Heart right ventricle (tissue), 16 donors: ENCODE measurements at regions of chr20 and their contacts with region 1.

Region 1: DNA sequence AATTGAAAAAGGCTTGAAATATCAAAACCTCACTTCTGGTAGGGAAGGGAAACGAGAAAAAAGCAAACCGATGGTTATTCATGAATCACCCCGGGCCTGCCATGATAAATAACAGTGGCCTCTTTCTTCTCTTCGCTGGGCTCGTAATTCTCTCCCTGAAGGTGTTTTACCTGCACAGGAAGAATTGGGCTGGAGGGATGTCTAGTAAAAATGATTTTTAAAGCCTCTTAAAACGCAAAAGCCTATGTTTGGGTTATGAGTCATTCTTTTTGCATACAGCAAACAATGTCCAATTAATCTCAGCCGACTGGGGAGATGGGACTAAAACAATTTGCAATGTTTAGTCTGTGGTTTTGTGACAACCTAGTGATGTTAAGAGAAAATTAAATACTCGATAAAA is 16.8 kb downstream of the LINC00237 start:
- DNase-seq: no peak
- ATAC-seq: no peak
- H3K4me3 ChIP-seq: no peak overlapping the region
- H3K27ac ChIP-seq: no peak overlapping the region
- H3K4me1 ChIP-seq: no peaks in the 10 kb centered on the region
- H3K27me3 ChIP-seq: peaks cover 0 to 92% (median 82%) of the 10 kb centered on the region in 7 donors
- CTCF ChIP-seq: no peak

Region 2: GRCh38 chr20:20649945-20650344 is 439.4 kb before region 1 on chr20:
- intact Hi-C with region 1: loop called in 1 of 10 experiments (anchors 10 kb)
- DNase-seq: no peak
- ATAC-seq: no peak
- H3K4me3 ChIP-seq: no peak overlapping the region
- H3K27ac ChIP-seq: no peak overlapping the region
- H3K4me1 ChIP-seq: peaks cover 0 to 3% (median 0%) of the 10 kb centered on the region in 9 donors
- H3K27me3 ChIP-seq: no peaks in the 10 kb centered on the region
- CTCF ChIP-seq: no peak

Region 3: GRCh38 chr20:21020659-21021471 is 68.5 kb before region 1 on chr20:
- intact Hi-C with region 1: no loop called
- DNase-seq: no peak
- ATAC-seq: peak in 1 of 8 donors; percentile 18
- H3K4me3 ChIP-seq: peak overlapping the region in 1 of 10 donors; percentile 3
- H3K27ac ChIP-seq: no peak overlapping the region
- H3K4me1 ChIP-seq: peaks cover 0 to 4% (median 0%) of the 10 kb centered on the region in 9 donors
- H3K27me3 ChIP-seq: peaks cover 6 to 70% (median 51%) of the 10 kb centered on the region in 7 donors
- CTCF ChIP-seq: no peak

Region 4: DNA sequence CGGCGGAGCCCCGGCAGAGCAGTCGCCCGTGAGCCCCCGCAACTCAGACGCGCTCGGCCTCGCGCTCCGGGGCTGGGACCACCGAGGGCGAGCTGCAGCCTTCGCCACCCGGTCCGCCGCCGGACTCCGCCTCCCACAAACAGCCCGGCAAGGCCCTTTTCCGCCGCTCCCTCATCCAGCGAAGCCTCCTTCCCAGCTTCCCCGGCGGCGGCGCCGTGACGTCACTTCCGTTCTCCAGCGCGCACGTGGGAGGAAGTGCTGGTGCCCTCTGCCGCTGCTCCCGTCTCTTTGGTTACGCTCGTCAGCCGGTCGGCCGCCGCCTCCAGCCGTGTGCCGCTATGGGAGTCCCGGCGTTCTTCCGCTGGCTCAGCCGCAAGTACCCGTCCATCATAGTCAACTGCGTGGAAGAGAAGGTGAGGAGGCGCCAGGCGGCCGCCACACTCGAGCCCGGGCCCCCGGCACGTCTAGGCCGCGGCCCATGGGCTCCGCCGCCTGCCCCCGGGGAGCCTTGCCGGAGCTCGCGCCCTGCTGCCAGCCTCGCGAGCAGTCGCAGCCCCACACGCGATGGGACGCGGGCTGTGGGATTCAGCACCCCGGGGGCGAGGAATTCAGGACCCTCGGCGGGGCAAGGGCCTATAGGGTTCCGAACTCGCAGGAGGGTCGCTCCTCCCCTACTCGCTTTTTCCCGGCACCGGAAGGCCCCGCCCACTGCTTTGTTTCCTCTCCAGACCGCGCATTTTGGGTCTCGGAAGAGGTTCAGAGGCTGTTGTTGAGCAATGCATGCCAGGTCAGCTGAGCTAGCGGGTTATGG is 213.9 kb after region 1 on chr20 and contains the start of gene XRN2:
- intact Hi-C with region 1: no loop called
- DNase-seq: peak; percentile 96 to 97
- ATAC-seq: peak; percentile 98 to 99 (median 99)
- H3K4me3 ChIP-seq: peak within 1 kb of the TSS; percentile 70 to 99 (median 86)
- H3K27ac ChIP-seq: peak within 1 kb of the TSS; percentile 80 to 99 (median 96)
- H3K4me1 ChIP-seq: peaks cover 3 to 23% (median 18%) of the 10 kb centered on the region in 9 donors
- H3K27me3 ChIP-seq: no peaks in the 10 kb centered on the region
- CTCF ChIP-seq: peak in 4 of 9 donors; percentile 5 to 46 (median 26)
- total RNA-seq, gene XRN2: 28.6 to 39.8 (median 32.1) TPM